Mammary epithelial cell (primary cell): ENCODE measurements at regions of chr17 and their contacts with region 1.

Region 1: DNA sequence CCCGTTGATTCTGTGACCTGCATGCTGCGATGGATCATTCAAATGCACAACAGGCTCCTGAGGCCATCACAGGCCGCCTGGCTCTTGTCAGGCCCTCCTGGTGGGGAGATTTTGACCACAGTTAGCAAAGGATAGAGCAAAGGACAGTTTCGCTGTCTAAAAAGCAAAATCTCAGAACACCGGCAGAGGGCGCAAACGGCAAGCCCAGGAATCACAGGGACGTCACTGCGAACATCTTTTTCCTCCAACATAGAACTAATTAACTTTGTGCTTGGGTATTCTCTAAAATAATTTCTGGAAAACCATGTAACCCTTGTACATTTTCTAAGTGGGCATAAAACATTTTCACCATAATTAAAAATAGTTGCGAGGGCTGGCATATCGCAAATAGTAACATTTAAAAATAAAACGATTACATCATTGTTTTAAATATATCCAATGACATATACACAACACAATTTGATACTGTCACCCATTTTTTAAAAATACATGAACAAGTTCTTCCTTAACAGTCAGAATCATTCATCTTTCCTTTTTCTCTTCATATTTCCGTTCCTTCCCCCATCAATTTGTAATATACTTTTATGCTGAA is 19.7 kb upstream of the SLC47A1 start:
- DNase-seq: peak; percentile 28
- H3K4me3 ChIP-seq: no peak overlapping the region
- H3K27ac ChIP-seq: no peak overlapping the region
- H3K4me1 ChIP-seq: no peaks in the 10 kb centered on the region
- H3K27me3 ChIP-seq: no peaks in the 10 kb centered on the region
- CTCF ChIP-seq: peak; percentile 90 to 95

Region 2: DNA sequence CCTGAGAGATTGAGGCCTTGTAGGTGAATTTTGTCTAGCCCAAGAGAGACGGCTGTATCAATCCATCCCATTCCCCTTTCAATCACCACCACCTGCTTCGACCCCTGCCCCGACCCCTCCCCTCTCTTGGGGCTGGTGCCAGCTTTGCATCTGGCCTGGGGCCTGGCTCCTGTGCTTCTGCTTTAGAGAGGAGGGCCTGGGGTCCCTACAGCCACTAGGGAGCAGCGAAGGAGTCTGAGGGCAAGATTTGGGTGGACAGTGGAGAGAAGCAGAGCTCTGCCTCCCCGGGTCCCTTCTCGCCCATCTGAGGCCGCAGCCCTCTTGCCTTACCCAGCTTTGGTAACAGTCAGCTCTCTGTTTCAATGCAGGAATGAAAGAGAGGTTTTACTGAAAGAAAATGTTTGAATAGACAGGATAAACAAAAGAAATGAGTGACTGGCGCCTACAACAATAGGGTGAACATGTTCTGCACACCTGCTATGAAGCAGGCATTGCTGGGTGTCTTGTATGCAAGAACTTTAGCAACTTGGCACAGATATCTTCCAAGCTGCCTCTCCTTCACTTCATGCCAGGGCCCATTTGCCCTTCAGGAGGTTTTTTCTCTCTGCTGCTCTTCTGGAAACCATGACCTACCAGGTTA is 77.0 kb after region 1 on chr17:
- CTCF ChIA-PET with region 1: no interaction called
- dilution Hi-C with region 1: loop called (anchors 5 kb)
- in situ Hi-C with region 1: no loop called
- intact Hi-C with region 1: no loop called
- DNase-seq: no peak
- H3K4me3 ChIP-seq: no peak overlapping the region
- H3K27ac ChIP-seq: no peak overlapping the region
- H3K4me1 ChIP-seq: no peaks in the 10 kb centered on the region
- H3K27me3 ChIP-seq: no peaks in the 10 kb centered on the region
- CTCF ChIP-seq: no peak

Region 3: DNA sequence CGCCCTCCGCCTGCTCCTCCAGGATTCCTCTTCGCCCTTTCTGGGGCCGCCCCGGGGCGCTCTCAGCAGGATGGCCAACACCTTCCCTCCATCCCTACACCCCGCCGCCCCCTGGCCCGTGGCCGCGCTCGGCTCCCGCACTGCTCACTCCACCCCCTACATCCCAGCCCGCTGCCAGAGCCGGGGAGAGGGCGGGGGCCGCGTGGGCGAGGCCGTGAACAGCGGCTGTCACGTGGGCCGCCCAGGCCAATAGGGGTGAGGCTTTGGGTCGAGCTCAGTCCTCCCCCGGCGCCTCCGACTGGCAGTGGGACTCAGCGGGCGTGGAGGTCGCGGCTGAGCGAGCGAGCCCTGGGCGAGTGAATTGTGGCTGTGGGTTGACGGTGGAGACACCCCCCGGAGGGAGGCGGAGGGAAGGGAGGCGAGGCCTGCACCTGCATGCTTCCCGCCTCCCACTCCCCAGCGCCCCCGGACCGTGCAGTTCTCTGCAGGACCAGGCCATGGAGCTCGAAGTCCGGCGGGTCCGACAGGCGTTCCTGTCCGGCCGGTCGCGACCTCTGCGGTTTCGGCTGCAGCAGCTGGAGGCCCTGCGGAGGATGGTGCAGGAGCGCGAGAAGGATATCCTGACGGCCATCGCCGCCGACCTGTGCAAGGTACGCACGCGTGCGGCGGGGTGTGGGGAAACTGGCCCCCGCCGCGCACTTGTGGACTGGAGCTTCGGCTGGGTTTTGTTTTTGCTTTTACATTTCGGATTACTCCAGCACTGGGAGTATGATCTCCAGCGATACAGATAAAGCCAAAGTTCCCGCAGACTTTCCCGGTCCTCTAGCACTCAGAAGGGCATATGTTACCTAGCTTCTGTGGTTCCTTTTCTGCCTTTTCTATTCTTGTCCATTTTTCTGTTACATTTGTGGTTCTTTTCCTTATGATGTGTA is 134.7 kb after region 1 on chr17 and contains the start of gene ALDH3A2:
- CTCF ChIA-PET with region 1: interaction called, 3 read pairs
- dilution Hi-C with region 1: no loop called
- in situ Hi-C with region 1: no loop called
- intact Hi-C with region 1: loop called (anchors 1 kb)
- DNase-seq: peak; percentile 91
- H3K4me3 ChIP-seq: peak within 1 kb of the TSS; percentile 78 to 94 (median 84)
- H3K27ac ChIP-seq: peak within 1 kb of the TSS; percentile 72
- H3K4me1 ChIP-seq: peaks cover 40% of the 10 kb centered on the region
- H3K27me3 ChIP-seq: no peaks in the 10 kb centered on the region
- CTCF ChIP-seq: no peak
- total RNA-seq, gene ALDH3A2: 59.5 to 212 TPM

Region 4: GRCh38 chr17:19718604-19719354 is 204.8 kb after region 1 on chr17:
- CTCF ChIA-PET with region 1: no interaction called
- dilution Hi-C with region 1: no loop called
- in situ Hi-C with region 1: loop called in 1 of 2 experiments (anchors 10 kb)
- intact Hi-C with region 1: loop called (anchors 1 kb)
- DNase-seq: peak; percentile 23
- H3K4me3 ChIP-seq: no peak overlapping the region
- H3K27ac ChIP-seq: peak overlapping the region; percentile 45
- H3K4me1 ChIP-seq: peaks cover 50% of the 10 kb centered on the region
- H3K27me3 ChIP-seq: no peaks in the 10 kb centered on the region
- CTCF ChIP-seq: peak; percentile 49 to 75

Region 5: GRCh38 chr17:19753049-19753444 is 239.1 kb after region 1 on chr17:
- CTCF ChIA-PET with region 1: interaction called, 3 read pairs
- dilution Hi-C with region 1: no loop called
- in situ Hi-C with region 1: loop called in 1 of 2 experiments (anchors 5 kb)
- intact Hi-C with region 1: loop called (anchors 1 kb)
- DNase-seq: peak; percentile 96
- H3K4me3 ChIP-seq: no peak overlapping the region
- H3K27ac ChIP-seq: peak overlapping the region; percentile 96
- H3K4me1 ChIP-seq: peaks cover 54% of the 10 kb centered on the region
- H3K27me3 ChIP-seq: no peaks in the 10 kb centered on the region
- CTCF ChIP-seq: peak in 1 of 2 donors; percentile 1

Region 6: GRCh38 chr17:19766422-19767270 is 252.7 kb after region 1 on chr17:
- CTCF ChIA-PET with region 1: interaction called, 3 read pairs
- dilution Hi-C with region 1: loop called (anchors 5 kb)
- in situ Hi-C with region 1: loop called in 1 of 2 experiments (anchors 5 kb)
- intact Hi-C with region 1: loop called (anchors 1 kb)
- DNase-seq: peak; percentile 38
- H3K4me3 ChIP-seq: no peak overlapping the region
- H3K27ac ChIP-seq: no peak overlapping the region
- H3K4me1 ChIP-seq: no peaks in the 10 kb centered on the region
- H3K27me3 ChIP-seq: no peaks in the 10 kb centered on the region
- CTCF ChIP-seq: peak; percentile 87 to 100